ENCODE measurements at regions of chr3 and their contacts with region 1.

Region 1: DNA sequence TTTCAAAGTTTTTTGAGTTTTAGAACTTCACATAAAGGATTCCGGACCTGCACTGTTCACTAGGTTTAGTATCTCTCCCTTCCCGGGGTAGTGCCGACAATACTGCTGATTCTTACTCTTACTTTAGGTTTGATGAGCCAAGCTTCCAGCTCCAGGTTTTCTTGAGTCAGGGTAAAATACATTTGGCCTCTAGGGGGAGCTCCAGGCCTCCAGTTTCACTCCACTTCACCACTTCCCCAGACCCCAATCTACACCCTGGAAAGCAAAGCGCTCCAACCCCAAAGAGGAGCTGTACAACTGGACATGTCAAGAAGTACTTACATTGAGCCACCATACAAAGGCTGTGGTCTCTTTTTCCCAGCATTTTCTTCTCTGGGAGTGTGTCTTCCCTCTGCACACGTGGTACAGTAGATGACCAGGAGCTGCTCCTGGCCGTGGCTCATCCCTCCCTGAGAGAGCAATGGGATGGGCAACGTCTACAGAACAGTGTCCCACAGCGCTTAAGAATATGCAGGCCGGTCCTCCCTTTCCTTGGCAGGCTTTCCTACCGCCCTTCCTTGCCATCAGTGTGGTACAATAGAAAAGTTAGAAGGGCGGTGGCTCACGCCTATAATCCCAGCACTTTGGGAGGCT is 93.9 kb upstream of the CCDC80 start:
- DNase-seq: no peak
- ATAC-seq: no peak

Region 2: DNA sequence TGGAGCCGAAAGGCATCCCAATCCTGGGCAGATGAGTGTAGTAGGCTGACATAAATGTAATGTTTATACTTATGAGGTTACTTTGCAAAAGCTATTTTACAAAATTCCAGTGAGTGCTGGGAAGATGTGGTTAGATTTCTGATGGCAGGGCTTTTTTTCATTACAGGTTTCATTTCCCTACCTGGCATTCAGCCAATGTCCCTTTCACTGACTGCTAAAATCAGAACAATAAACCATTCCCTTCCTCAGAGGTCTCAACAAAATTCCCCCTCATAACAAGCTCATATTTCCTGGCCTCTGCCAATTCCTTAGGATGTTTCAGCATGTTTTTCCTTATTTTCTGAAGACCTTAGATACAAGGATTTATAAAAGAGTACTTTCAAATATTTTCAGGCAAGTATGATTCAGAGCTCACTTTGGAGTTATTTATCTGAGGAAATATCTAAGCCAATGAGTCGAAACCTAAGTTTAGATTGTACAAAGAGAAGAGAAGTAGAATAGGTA is 53.0 kb before region 1 on chr3:
- intact Hi-C with region 1: no loop called
- DNase-seq: no peak
- ATAC-seq: no peak

Region 3: GRCh38 chr3:112814266-112814665 is 79.4 kb after region 1 on chr3:
- intact Hi-C with region 1: loop called (anchors 5 kb)
- DNase-seq: no peak
- ATAC-seq: peak; percentile 35

Region 4: DNA sequence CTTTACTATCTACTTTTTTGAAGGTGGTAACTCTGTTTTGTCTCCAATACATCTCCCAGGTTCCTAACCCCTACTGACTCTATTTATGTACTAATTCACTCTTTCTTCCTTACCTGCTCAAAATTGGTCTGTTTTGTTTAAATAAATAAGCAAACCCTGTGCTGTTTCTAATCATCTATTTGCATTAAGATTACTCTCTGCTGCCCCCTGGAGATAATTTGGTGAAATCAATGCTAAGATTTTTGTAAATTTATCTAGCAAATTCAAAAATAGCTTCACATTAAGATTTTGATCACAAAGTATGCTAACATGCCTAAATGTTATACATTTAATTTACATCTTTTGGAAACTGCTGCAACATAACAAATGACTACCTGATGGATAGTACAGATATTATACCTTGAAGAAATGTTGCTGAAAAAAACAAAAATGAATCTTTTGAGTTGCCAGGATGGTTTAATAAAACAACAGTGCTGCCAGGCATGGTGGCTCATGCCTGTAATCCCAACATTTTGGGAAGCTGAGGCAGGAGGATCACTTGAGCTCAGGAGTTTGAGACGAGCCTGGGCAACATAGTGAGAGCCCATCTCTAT is 244.5 kb after region 1 on chr3:
- intact Hi-C with region 1: loop called (anchors 10 kb)
- DNase-seq: no peak
- ATAC-seq: no peak

Region 5: GRCh38 chr3:113275929-113276750 is 541.3 kb after region 1 on chr3:
- intact Hi-C with region 1: no loop called
- DNase-seq: no peak
- ATAC-seq: peak; percentile 79